Adrenal gland (tissue), 19 donors: ENCODE measurements at regions of chr13 and their contacts with region 1.

Region 1: GRCh38 chr13:50081679-50082425 is 66.6 kb downstream of the KCNRG start:
- DNase-seq: peak; percentile 98 to 99 (median 98)
- H3K4me3 ChIP-seq: peak overlapping the region; percentile 49 to 80 (median 60)
- H3K27ac ChIP-seq: peak overlapping the region; percentile 68 to 93 (median 88)
- H3K4me1 ChIP-seq: peaks cover 0 to 49% of the 10 kb centered on the region in 2 donors
- H3K27me3 ChIP-seq: no peaks in the 10 kb centered on the region
- CTCF ChIP-seq: peak in 2 of 6 experiments; percentile 14 to 18
- POLR2A ChIP-seq: peak; percentile 14 to 86

Region 2: DNA sequence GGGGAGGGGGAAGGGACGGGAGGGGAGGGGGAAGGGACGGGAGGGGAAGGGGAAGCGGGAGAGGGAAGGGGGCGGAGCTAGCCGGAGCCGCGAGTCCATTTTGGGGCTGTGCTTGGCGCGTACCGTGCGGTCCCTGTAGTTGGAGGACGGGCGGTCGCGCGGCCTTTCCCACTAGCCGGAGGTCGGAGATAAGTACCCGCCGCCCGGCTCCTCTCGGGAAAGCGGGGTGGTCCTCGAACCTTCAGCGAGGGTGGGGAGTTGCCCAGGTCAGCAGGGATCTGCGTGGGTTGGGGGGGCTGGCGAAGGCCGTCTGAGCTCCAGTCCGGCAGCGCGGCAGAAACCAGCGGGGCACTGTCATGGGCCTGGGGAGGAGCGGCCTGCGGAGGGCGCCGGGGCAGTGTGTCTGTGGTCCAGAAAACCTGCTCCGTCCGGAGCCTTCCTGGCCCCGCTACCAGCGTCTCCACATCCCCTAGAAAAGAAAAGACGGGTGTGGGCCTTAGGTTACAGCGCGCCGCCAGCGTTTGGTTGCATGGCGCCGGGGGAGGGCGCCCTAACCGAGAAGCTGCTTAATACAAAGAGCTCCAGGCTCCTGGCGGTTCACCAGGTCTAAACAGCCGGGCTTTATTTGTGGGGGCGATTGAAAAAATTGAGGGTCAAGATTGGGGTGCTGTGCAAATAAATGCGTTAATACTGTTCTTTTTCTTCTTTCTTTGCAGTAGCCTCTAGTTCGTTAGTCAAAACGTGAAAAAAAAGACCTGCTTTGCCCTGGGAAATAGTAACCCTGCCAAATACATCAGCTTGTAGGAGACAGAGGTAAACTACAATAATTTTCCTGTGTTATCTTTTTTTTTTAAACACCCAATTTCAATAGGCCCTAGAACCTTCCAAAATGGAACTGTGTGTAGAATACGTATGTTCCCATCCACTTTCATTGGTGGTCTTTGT is 84.6 kb before region 1 on chr13 and contains the start of gene TRIM13:
- intact Hi-C with region 1: loop called in 1 of 2 experiments (anchors 10 kb)
- DNase-seq: peak; percentile 86 to 96 (median 91)
- H3K4me3 ChIP-seq: peak within 1 kb of the TSS; percentile 69 to 94 (median 88)
- H3K27ac ChIP-seq: peak within 1 kb of the TSS; percentile 99 to 100 (median 100)
- H3K4me1 ChIP-seq: peaks cover 23 to 50% of the 10 kb centered on the region in 2 donors
- H3K27me3 ChIP-seq: no peaks in the 10 kb centered on the region
- CTCF ChIP-seq: peak; percentile 51 to 82 (median 70)
- POLR2A ChIP-seq: peak; percentile 60 to 67
- total RNA-seq, gene TRIM13: 13.7 to 28.7 (median 20.4) TPM

Region 3: GRCh38 chr13:50125537-50126262 is 43.8 kb after region 1 on chr13:
- intact Hi-C with region 1: loop called in 1 of 2 experiments (anchors 5 kb)
- DNase-seq: peak; percentile 95 to 97 (median 96)
- H3K4me3 ChIP-seq: peak overlapping the region in 3 of 4 donors; percentile 63 to 96 (median 83)
- H3K27ac ChIP-seq: peak overlapping the region; percentile 97 to 100 (median 98)
- H3K4me1 ChIP-seq: peaks cover 14 to 38% of the 10 kb centered on the region in 2 donors
- H3K27me3 ChIP-seq: no peaks in the 10 kb centered on the region
- CTCF ChIP-seq: no peak
- POLR2A ChIP-seq: peak; percentile 61 to 90

Region 4: DNA sequence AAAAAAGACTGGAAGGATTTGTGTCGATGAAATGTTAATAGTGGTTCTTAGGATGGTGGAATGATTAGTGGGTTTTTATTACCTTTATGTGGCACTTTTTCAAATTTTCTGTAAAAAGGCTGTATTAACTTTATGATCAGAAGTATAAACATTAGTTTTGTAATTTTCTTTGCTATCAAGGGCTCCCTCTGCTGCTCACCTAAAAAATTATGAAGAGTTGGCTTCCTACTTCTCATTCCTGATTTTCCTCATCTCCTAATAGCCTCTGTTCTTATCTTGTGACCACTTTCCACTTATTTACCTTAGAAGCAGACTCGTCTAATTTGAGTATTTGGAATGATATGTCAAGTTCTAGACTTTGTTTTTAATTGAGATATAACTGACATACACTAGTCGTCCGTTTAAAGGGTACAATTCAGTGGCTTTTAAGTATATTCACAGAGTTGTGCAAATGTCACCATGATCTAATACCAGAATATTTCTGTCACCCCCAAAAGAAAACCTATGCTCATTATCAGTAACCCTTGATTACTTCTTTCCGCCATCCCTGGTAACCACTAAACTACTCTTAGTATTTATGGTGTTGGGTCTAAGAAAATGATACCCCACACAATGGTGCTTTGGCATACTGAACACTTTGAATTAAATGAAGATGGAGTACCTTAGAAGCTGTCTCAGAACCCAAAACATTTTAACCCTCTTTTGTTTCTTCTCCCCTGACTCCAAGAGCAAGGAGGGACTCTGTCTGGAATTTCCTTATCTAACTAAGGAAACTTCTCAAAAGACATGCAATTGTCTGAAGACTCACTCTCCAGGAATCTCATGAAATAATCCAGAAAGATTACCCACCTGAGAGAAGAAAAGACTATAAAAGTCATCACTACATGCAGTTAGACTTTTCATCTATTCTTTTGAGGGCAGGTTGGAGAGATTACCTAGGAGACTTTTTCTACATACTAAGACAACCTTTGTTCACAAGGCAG is 450.4 kb after region 1 on chr13:
- intact Hi-C with region 1: loop called in 1 of 2 experiments (anchors 5 kb)
- DNase-seq: peak in 1 of 7 donors; percentile 22
- H3K4me3 ChIP-seq: no peak overlapping the region
- H3K27ac ChIP-seq: no peak overlapping the region
- H3K4me1 ChIP-seq: peaks cover 0 to 21% of the 10 kb centered on the region in 2 donors
- H3K27me3 ChIP-seq: no peaks in the 10 kb centered on the region
- CTCF ChIP-seq: peak; percentile 34 to 72 (median 64)
- POLR2A ChIP-seq: no peak